ENCODE measurements at regions of chr4 and their contacts with region 1.

Region 1: GRCh38 chr4:40576631-40577480 is 52.8 kb downstream of the RBM47 start:
- DNase-seq: peak; percentile 70
- CTCF ChIP-seq: no peak

Region 2: GRCh38 chr4:40564004-40564403 is 12.9 kb before region 1 on chr4:
- CTCF ChIA-PET with region 1: interaction called, 44 read pairs
- POLR2A ChIA-PET with region 1: no interaction called
- DNase-seq: no peak
- CTCF ChIP-seq: no peak

Region 3: DNA sequence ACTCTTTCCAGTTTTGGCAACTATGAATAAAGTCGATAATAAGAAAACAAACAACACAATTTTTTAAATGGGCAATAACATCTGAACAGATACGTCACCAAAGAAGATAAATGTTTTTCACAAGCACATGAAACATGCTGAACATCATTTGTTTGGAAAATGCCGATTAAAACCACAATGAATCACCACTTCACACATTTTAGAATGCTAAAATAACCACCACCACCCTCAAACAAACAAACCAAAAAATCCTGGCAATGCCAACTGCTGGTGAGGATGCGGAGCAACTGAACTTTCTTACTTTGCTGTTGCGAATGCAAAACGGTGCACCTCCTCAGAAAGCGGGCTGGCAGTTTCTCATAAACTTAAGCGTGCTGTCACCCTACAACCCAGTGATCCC is 288.8 kb after region 1 on chr4:
- CTCF ChIA-PET with region 1: no interaction called
- POLR2A ChIA-PET with region 1: no interaction called
- DNase-seq: no peak
- CTCF ChIP-seq: no peak

Measured in GM10248 (cell line).